Prostate gland (tissue), 2 donors: ENCODE measurements at regions of chr5 and their contacts with region 1.

Region 1: DNA sequence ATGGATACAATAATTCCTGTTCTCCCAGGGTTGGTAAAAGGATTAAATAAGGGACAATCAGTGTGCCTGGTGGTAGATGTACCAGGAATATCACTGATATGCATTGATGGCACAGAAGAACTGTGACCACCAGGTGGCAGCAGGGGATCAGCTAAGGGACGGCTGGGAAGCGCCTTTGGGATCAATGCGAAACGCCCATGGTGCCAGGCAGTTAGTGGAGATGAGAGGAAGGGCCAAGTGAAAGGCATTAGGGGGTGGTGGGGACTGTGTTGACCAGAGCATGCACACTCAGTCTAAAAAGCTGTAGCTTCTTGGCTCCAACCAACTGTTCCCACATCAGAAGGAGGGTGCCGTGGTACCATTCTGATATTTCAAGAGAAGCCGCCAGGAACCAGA is 55.6 kb downstream of the ARHGEF37 start:
- DNase-seq: peak; percentile 70
- H3K4me3 ChIP-seq: no peak overlapping the region
- H3K27ac ChIP-seq: no peak overlapping the region
- H3K4me1 ChIP-seq: peaks cover 6% of the 10 kb centered on the region
- H3K27me3 ChIP-seq: no peaks in the 10 kb centered on the region
- CTCF ChIP-seq: peak; percentile 54 to 93 (median 76)
- POLR2A ChIP-seq: no peak

Region 2: GRCh38 chr5:149711338-149711737 is 74.5 kb after region 1 on chr5:
- intact Hi-C with region 1: no loop called
- DNase-seq: no peak
- H3K4me3 ChIP-seq: no peak overlapping the region
- H3K27ac ChIP-seq: no peak overlapping the region
- H3K4me1 ChIP-seq: no peaks in the 10 kb centered on the region
- H3K27me3 ChIP-seq: no peaks in the 10 kb centered on the region
- CTCF ChIP-seq: no peak
- POLR2A ChIP-seq: no peak

Region 3: DNA sequence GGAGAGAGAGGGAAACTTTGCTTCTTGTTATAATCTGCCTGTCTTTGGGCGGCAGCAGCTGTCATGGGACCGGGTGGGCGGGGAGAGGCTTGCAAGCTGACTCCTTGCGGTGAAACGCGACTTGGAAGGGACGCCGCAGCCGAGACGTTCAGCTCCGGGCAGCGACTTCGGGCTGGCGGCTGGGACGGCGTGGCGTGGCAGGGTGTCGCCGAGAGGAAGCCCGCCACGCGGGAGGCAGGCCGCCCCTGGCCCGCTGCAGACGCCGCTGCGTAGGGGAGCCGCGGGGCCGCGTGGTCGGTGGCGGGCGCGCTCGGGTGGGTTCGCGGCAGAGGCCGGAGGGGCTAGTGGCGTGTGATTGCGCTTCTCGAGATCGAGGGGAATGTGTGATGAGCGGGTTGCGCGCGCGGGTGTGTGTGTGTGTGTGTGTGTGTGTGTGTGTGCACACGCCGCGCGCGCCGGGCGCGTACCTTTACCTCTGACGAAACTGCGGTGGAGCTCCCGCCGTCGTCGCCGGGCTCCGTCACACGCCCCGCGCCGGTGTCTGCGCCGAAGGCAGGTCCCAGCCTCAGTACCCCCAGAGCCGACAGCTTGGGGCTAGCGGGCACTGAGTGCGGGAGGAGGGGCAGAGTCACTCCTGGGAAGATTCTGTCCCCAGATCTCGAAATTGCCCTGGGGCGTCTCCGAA is 94.9 kb after region 1 on chr5:
- intact Hi-C with region 1: loop called (anchors 5 kb)
- DNase-seq: peak; percentile 89
- H3K4me3 ChIP-seq: peak overlapping the region; percentile 60 to 71
- H3K27ac ChIP-seq: peak overlapping the region; percentile 72 to 77
- H3K4me1 ChIP-seq: no peaks in the 10 kb centered on the region
- H3K27me3 ChIP-seq: no peaks in the 10 kb centered on the region
- CTCF ChIP-seq: peak in 1 of 4 experiments; percentile 26
- POLR2A ChIP-seq: peak; percentile 80

Region 4: DNA sequence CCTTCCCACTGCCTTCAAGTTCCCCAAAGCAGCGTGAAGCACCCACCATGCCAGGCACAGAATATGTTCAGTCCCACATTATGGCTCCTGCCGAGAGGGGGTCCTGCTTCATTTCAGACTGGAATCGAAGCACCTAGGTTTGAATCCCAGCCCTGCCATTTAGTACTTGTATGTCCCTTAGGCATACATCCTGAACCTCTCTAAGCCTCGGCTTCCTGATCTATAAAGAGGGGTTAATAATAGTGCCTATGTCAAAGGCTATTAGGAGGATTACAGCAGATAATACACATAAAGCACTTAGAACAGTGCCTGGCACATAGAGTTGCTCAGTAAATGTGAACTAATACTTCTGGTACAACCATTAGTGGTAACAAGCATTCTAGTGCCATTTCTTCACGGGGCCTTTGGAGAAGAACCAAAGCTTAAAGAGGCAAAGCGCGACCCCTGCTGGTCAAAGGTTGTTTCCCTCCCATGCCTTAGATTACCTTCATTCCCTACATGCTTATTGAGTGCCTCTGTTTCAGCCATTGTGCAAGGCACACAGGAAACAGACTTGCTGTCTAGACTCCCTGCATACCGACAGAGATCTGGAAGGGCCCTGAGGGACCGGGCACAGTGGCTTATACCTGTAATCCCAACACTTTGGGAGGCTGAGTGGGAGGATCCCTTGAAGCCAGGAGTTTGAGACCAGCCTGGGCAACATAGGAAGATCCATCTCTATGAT is 191.5 kb after region 1 on chr5:
- intact Hi-C with region 1: loop called (anchors 1 kb)
- DNase-seq: peak; percentile 86
- H3K4me3 ChIP-seq: no peak overlapping the region
- H3K27ac ChIP-seq: peak overlapping the region in 1 of 2 donors; percentile 3
- H3K4me1 ChIP-seq: no peaks in the 10 kb centered on the region
- H3K27me3 ChIP-seq: no peaks in the 10 kb centered on the region
- CTCF ChIP-seq: peak; percentile 84 to 95 (median 92)
- POLR2A ChIP-seq: no peak

Region 5: DNA sequence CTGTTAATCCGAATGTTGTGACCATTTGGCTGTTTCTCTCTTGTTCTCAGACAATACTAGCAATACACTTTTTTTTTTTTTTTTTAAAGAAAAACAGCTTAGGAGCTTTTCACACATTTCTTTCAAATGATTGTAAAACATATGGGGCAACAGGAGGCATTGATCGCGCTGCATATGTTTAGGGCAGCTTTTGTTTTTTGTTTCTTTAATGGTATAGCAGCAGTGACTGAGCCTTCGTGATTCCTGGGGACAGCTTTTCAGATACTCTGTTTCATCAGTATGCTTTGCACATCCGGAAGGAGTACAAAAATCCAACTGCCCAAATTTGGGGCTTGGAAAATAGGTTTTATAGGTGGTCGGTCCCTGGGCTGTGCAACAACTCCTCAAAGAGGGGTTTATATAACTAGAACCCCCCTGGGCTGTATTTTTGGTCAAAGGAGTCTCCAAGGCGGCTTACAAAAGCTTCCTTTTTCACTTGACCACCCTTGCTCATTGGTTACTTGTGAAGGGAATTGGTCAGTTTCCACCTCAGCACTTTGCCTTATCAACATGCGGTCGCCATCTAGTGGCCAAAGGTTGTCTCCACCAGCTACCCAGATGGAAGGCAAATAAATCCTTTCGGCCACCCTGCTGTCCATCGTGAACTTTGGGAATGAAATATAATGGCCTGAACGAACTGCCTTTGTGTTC is 215.9 kb after region 1 on chr5:
- intact Hi-C with region 1: loop called (anchors 2 kb)
- DNase-seq: peak; percentile 70
- H3K4me3 ChIP-seq: no peak overlapping the region
- H3K27ac ChIP-seq: no peak overlapping the region
- H3K4me1 ChIP-seq: peaks cover 5% of the 10 kb centered on the region
- H3K27me3 ChIP-seq: no peaks in the 10 kb centered on the region
- CTCF ChIP-seq: peak; percentile 52 to 83 (median 71)
- POLR2A ChIP-seq: no peak

Region 6: DNA sequence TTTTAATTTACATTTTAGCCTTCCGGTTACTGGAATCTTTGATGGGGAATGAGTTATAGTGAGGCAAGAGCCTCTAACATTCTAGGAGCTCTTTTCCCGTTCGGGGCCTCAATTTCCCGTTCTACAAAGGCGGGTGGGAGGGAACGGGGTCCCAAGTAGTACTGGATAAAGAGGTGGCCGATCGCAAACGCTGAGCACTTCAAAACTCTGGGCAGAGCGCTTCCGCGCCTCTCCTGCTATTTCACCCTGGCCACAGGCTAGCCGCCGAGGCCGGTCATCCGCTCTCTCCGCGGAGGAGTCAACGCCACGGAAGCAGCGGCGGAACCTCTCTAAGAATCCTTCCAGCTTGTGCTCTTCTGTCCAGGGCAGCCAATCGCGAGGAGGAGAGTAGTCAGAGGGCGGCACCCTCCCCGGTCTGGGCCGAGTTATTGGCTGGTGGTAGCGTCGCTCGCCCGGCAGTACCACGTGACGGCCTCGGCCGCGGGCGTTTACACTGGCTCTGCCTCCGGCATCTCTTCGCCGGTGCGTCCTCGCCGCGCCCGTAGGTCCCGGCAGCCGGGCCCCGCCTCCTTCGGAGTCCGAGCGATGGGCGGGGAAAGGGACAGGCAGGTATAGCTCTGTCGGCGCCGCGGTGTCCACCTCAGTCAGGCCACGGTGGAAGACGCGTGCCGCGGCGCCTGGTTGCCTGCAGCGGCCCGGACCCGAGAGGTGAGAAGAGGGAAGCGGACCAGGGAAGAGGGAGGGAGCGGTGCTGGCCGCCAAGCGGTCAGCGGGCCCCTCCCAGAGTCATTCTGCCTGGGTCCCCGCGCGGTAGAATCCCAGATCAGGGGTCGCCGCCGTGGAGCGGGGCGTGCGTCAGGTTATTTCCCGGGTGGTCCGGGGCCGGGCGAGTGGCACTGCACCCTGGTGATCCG is 323.7 kb after region 1 on chr5 and contains the start of gene SLC26A2:
- intact Hi-C with region 1: loop called (anchors 5 kb)
- DNase-seq: peak; percentile 99
- H3K4me3 ChIP-seq: peak within 1 kb of the TSS; percentile 77
- H3K27ac ChIP-seq: peak within 1 kb of the TSS; percentile 87 to 92
- H3K4me1 ChIP-seq: no peaks in the 10 kb centered on the region
- H3K27me3 ChIP-seq: no peaks in the 10 kb centered on the region
- CTCF ChIP-seq: peak in 2 of 4 experiments; percentile 2 to 23
- POLR2A ChIP-seq: peak; percentile 92
- total RNA-seq, gene SLC26A2: 19.4 to 31.0 TPM

Region 7: GRCh38 chr5:149990518-149991376 is 353.9 kb after region 1 on chr5:
- intact Hi-C with region 1: loop called (anchors 5 kb)
- DNase-seq: peak; percentile 84
- H3K4me3 ChIP-seq: no peak overlapping the region
- H3K27ac ChIP-seq: peak overlapping the region in 1 of 2 donors; percentile 8
- H3K4me1 ChIP-seq: peaks cover 9% of the 10 kb centered on the region
- H3K27me3 ChIP-seq: no peaks in the 10 kb centered on the region
- CTCF ChIP-seq: peak; percentile 80 to 96 (median 91)
- POLR2A ChIP-seq: no peak